Tibial artery (tissue), 4 donors: ENCODE measurements at regions of chr12 and their contacts with region 1.

Region 1: GRCh38 chr12:112012775-112013600 is at the starts of genes ERP29 and TMEM116:
- DNase-seq: peak; percentile 100
- H3K4me3 ChIP-seq: peak within 1 kb of the TSS; percentile 72 to 86
- H3K27ac ChIP-seq: peak within 1 kb of the TSS; percentile 94 to 97
- H3K4me1 ChIP-seq: peaks cover 5 to 35% (median 25%) of the 10 kb centered on the region in 4 donors
- H3K27me3 ChIP-seq: no peaks in the 10 kb centered on the region
- CTCF ChIP-seq: peak; percentile 78 to 80

Region 2: GRCh38 chr12:111841750-111842555 is 171.0 kb before region 1 on chr12 and contains the start of gene MAPKAPK5:
- intact Hi-C with region 1: loop called (anchors 5 kb)
- DNase-seq: peak; percentile 91 to 95
- H3K4me3 ChIP-seq: peak within 1 kb of the TSS; percentile 83 to 100
- H3K27ac ChIP-seq: peak within 1 kb of the TSS; percentile 85 to 96
- H3K4me1 ChIP-seq: peaks cover 0 to 47% (median 42%) of the 10 kb centered on the region in 4 donors
- H3K27me3 ChIP-seq: no peaks in the 10 kb centered on the region
- CTCF ChIP-seq: no peak

Region 3: DNA sequence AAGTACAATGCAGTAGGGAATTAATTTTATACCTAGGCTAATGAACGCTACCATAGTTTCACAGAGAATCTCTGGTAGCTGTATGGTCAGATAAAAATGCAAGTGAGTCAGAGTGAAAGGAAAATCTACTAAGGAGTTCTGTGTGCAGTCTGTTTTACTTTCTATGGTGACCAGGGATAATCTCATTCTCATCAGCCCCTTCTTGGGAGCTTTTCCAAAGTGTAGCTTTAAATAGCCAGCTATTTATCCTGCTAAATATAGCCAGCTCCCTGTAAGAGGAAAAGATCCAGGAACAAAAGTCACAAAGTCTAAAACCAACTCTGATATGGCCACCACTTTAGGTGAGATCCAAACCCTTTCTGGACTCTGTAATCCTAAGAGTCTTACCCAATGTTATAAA is 75.6 kb before region 1 on chr12:
- intact Hi-C with region 1: loop called (anchors 5 kb)
- DNase-seq: no peak
- H3K4me3 ChIP-seq: no peak overlapping the region
- H3K27ac ChIP-seq: peak overlapping the region; percentile 53 to 67
- H3K4me1 ChIP-seq: peaks cover 0 to 24% (median 2%) of the 10 kb centered on the region in 4 donors
- H3K27me3 ChIP-seq: no peaks in the 10 kb centered on the region
- CTCF ChIP-seq: no peak

Region 4: GRCh38 chr12:112230136-112230535 is 217.1 kb after region 1 on chr12:
- intact Hi-C with region 1: no loop called
- DNase-seq: no peak
- H3K4me3 ChIP-seq: no peak overlapping the region
- H3K27ac ChIP-seq: no peak overlapping the region
- H3K4me1 ChIP-seq: no peaks in the 10 kb centered on the region
- H3K27me3 ChIP-seq: no peaks in the 10 kb centered on the region
- CTCF ChIP-seq: no peak